AG04450 (cell line): ENCODE measurements at regions of chr1 and their contacts with region 1.

Region 1: GRCh38 chr1:175742790-175743459 is 470 bp downstream of the TNR start:
- DNase-seq: no peak
- H3K4me3 ChIP-seq: no peak overlapping the region
- H3K27ac ChIP-seq: no peak overlapping the region
- H3K27me3 ChIP-seq: no peaks in the 10 kb centered on the region
- CTCF ChIP-seq: no peak

Region 2: DNA sequence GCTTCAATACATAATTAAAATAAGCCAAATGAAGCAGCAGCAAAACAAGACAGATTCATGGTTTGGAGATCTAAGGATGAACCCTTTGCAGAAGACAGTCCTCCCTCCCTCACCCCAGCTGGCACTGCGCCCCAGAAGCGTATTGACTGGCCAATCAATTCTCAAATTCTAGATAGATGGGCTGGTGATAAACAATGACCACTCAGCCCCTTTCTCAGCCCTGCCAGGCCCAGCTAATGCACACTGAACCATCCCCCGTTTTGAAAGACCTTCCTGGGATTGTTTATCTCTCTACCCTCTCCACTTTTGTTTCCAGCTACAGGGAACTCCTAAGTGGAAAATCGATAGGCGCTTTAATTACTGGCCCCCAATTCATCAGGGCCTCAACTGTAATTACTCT is 28.6 kb before region 1 on chr1:
- CTCF ChIA-PET with region 1: no interaction called
- POLR2A ChIA-PET with region 1: no interaction called
- DNase-seq: no peak
- H3K4me3 ChIP-seq: no peak overlapping the region
- H3K27ac ChIP-seq: no peak overlapping the region
- H3K27me3 ChIP-seq: no peaks in the 10 kb centered on the region
- CTCF ChIP-seq: no peak

Region 3: GRCh38 chr1:175757381-175758015 is 14.6 kb after region 1 on chr1:
- CTCF ChIA-PET with region 1: interaction called, 11 read pairs
- POLR2A ChIA-PET with region 1: no interaction called
- DNase-seq: no peak
- H3K4me3 ChIP-seq: no peak overlapping the region
- H3K27ac ChIP-seq: no peak overlapping the region
- H3K27me3 ChIP-seq: no peaks in the 10 kb centered on the region
- CTCF ChIP-seq: peak; percentile 67